Activated T-helper 2 cell treated with anti-CD3 and anti-CD28 coated beads, Interferon-gamma antibody, Interleukin-2, Interleukin-4, amounts not matched to agents 10 μg/mL and 5 μg/mL and 100 μg/mL, durations not matched to agents 14 hours and 24 hours and 36 hours (primary cell): ENCODE measurements at regions of chrX and their contacts with region 1.

Region 1: DNA sequence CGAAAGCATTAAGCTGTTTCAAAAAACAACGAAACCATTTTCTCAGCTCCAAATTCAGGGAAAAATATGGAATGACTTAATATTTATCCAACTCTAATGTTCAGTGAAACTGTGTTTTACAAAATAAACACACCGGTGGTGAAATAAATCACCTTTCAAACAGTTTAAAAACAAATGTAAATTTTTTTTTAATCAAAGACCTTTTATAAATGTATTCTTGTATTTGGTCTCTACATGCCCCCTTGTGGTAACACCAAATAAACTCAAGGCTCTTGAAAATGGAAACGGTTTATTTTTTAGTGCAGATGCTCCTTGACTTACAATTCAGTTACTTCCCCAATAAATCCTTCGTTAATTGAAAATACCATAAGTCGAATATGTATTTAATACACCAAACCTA is 45.8 kb upstream of the ITM2A start:
- DNase-seq: no peak
- H3K4me3 Mint-ChIP-seq: peak overlapping the region; percentile 69
- H3K27ac Mint-ChIP-seq: no peak overlapping the region
- H3K4me1 Mint-ChIP-seq: peaks cover 28% of the 10 kb centered on the region
- H3K27me3 Mint-ChIP-seq: no peaks in the 10 kb centered on the region

Region 2: DNA sequence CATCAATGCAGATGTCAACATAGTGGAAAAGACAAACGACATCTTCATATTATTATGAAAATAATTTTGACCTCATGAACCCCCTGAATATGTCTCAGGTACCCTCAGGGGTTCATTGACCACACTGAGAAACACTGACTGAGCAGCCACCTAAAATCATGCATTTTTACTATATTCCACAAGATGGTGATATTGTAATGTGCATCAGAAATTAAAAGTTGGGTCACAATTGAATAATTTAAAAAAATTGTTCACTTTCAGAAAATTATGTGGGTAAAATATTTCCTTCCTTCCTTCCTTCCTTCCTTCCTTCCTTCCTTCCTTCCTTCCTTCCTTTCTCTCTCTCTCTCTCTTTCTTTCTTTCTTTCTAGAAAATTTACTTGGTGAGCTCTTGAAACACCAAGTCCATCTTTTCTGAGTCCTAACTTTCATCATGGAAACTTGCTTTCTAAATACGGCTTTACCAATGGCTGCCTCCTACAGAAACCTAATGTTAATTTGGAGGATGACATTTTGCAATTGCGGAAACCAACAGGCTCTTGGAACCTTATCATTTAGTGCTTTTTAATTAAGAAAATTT is 857.5 kb before region 1 on chrX:
- intact Hi-C with region 1: loop called (anchors 5 kb)
- DNase-seq: no peak
- H3K4me3 Mint-ChIP-seq: no peak overlapping the region
- H3K27ac Mint-ChIP-seq: peak overlapping the region; percentile 38
- H3K4me1 Mint-ChIP-seq: peaks cover 5% of the 10 kb centered on the region
- H3K27me3 Mint-ChIP-seq: no peaks in the 10 kb centered on the region

Region 3: DNA sequence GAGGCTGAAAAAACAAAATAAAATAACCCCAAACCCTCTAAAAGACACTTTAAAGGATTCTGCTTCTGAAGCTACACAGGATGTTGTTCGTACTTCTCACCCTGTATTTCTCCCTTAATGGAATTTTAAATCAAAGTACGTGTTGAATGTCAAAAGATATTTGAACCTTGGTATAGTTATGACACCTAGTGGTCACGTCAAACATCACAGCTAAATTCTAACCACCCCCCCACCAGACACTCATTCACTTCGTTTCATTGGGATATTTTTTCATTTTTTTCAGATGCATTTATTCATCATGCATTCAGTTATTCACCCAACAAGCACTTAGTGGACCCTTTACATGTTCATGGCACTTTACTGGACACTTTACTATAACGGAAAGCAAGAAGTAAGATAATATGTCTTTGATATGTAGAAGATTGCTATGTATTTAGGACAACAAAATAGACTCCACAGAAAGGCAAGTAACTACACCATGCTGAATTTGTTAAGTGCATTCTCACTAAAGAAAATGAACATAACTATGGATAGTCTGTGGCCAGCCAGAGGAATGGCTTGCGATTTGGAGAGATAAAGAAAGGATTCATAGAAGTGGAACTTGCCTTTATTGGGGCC is 331.0 kb before region 1 on chrX:
- intact Hi-C with region 1: loop called (anchors 5 kb)
- DNase-seq: peak; percentile 10
- H3K4me3 Mint-ChIP-seq: no peak overlapping the region
- H3K27ac Mint-ChIP-seq: peak overlapping the region; percentile 65
- H3K4me1 Mint-ChIP-seq: peaks cover 19% of the 10 kb centered on the region
- H3K27me3 Mint-ChIP-seq: no peaks in the 10 kb centered on the region

Region 4: DNA sequence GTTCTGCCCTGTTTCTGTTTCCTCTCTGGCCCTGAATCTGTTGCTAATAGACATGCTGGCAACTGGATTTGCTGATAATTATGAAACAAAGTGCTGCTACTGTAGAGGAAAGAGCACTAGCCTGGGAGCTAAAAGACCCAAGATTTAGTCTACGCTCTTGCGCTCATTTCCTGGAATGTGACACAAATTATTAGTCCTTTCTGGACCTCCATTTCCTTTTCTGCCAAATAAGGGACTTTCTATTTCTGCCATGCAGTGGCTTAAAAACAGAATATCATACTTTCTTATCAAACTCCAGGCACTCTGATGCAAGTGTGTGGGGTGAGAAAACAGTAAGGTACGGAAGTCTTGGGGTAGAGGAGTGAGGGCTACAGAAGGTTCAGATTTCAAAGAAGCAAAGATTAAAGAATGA is 316.8 kb before region 1 on chrX:
- intact Hi-C with region 1: loop called (anchors 5 kb)
- DNase-seq: no peak
- H3K4me3 Mint-ChIP-seq: peak overlapping the region; percentile 42
- H3K27ac Mint-ChIP-seq: peak overlapping the region; percentile 93
- H3K4me1 Mint-ChIP-seq: peaks cover 48% of the 10 kb centered on the region
- H3K27me3 Mint-ChIP-seq: no peaks in the 10 kb centered on the region

Region 5: GRCh38 chrX:79167462-79167861 is 245.5 kb before region 1 on chrX:
- intact Hi-C with region 1: loop called (anchors 5 kb)
- DNase-seq: no peak
- H3K4me3 Mint-ChIP-seq: peak overlapping the region; percentile 26
- H3K27ac Mint-ChIP-seq: peak overlapping the region; percentile 91
- H3K4me1 Mint-ChIP-seq: peaks cover 66% of the 10 kb centered on the region
- H3K27me3 Mint-ChIP-seq: no peaks in the 10 kb centered on the region

Region 6: GRCh38 chrX:79270401-79270800 is 142.6 kb before region 1 on chrX:
- intact Hi-C with region 1: loop called (anchors 5 kb)
- DNase-seq: peak; percentile 49
- H3K4me3 Mint-ChIP-seq: no peak overlapping the region
- H3K27ac Mint-ChIP-seq: no peak overlapping the region
- H3K4me1 Mint-ChIP-seq: peaks cover 24% of the 10 kb centered on the region
- H3K27me3 Mint-ChIP-seq: no peaks in the 10 kb centered on the region

Region 7: GRCh38 chrX:79366873-79367749 is 45.9 kb before region 1 on chrX and contains the start of gene ITM2A:
- intact Hi-C with region 1: loop called (anchors 2 kb)
- DNase-seq: peak; percentile 34
- H3K4me3 Mint-ChIP-seq: peak within 1 kb of the TSS; percentile 95
- H3K27ac Mint-ChIP-seq: peak within 1 kb of the TSS; percentile 92
- H3K4me1 Mint-ChIP-seq: peaks cover 33% of the 10 kb centered on the region
- H3K27me3 Mint-ChIP-seq: no peaks in the 10 kb centered on the region
- total RNA-seq, gene ITM2A: 138 and 142 TPM in 2 replicates

Region 8: GRCh38 chrX:79645749-79646148 is 232.8 kb after region 1 on chrX:
- intact Hi-C with region 1: no loop called
- DNase-seq: no peak
- H3K4me3 Mint-ChIP-seq: no peak overlapping the region
- H3K27ac Mint-ChIP-seq: no peak overlapping the region
- H3K4me1 Mint-ChIP-seq: no peaks in the 10 kb centered on the region
- H3K27me3 Mint-ChIP-seq: no peaks in the 10 kb centered on the region